Endothelial cell of umbilical vein (primary cell): ENCODE measurements at regions of chr17 and their contacts with region 1.

Region 1: GRCh38 chr17:44331249-44331760 is 6.7 kb upstream of the SLC25A39 start:
- DNase-seq: peak; percentile 80
- H3K4me3 ChIP-seq: no peak overlapping the region
- H3K27ac ChIP-seq: no peak overlapping the region
- H3K4me1 ChIP-seq: no peaks in the 10 kb centered on the region
- H3K27me3 ChIP-seq: no peaks in the 10 kb centered on the region
- CTCF ChIP-seq: peak; percentile 68 to 72
- POLR2A ChIP-seq: no peak

Region 2: DNA sequence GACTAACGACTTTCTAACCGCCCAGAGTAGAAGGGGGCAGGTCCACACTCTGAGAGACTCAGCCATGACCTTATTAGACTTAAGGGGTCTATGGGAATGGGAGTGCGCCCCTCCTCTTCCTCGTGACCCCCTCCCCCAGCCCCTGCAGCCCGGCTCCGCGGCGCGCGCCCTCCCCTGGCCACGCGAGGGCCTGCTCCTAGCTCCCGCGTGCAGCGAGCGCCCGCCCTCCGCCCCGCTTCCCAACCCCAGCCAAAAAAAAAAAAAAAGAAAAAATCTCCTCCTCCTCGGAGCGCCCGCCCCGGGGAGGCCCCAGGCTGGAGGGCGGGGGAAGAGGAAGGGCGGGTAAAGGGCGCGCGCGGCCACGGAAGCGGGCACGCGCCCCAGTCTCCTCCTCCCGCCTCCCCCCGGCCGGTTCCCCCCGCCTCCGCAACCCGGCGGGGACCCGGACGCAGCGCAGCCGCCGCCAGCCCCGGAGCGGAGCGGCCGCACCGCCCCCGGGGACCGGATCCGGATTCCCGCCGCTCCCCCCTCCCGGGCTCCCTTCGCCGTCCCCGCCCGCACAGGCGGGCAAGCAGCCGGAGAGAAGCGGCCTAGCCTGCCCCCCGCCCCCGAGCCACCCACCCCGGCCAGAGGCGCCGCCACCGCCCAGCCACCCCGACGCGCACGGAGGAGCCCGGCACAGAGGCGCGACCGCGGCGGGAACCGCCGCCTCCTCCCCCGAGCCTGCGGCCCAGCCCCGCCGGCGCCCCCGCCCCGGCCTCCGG is 112.8 kb before region 1 on chr17:
- CTCF ChIA-PET with region 1: interaction called, 68 read pairs
- POLR2A ChIA-PET with region 1: interaction called, 5 read pairs
- dilution Hi-C with region 1: no loop called
- intact Hi-C with region 1: no loop called
- DNase-seq: peak; percentile 88
- H3K4me3 ChIP-seq: peak overlapping the region; percentile 9 to 68 (median 52)
- H3K27ac ChIP-seq: peak overlapping the region; percentile 71
- H3K4me1 ChIP-seq: peaks cover 34% of the 10 kb centered on the region
- H3K27me3 ChIP-seq: no peaks in the 10 kb centered on the region
- CTCF ChIP-seq: peak; percentile 53 to 72
- POLR2A ChIP-seq: no peak

Region 3: GRCh38 chr17:44235583-44235936 is 95.7 kb before region 1 on chr17:
- CTCF ChIA-PET with region 1: no interaction called
- POLR2A ChIA-PET with region 1: no interaction called
- dilution Hi-C with region 1: no loop called
- intact Hi-C with region 1: no loop called
- DNase-seq: no peak
- H3K4me3 ChIP-seq: no peak overlapping the region
- H3K27ac ChIP-seq: no peak overlapping the region
- H3K4me1 ChIP-seq: peaks cover 8% of the 10 kb centered on the region
- H3K27me3 ChIP-seq: peaks cover 0 to 2% of the 10 kb centered on the region in 2 experiments
- CTCF ChIP-seq: no peak
- POLR2A ChIP-seq: no peak

Region 4: DNA sequence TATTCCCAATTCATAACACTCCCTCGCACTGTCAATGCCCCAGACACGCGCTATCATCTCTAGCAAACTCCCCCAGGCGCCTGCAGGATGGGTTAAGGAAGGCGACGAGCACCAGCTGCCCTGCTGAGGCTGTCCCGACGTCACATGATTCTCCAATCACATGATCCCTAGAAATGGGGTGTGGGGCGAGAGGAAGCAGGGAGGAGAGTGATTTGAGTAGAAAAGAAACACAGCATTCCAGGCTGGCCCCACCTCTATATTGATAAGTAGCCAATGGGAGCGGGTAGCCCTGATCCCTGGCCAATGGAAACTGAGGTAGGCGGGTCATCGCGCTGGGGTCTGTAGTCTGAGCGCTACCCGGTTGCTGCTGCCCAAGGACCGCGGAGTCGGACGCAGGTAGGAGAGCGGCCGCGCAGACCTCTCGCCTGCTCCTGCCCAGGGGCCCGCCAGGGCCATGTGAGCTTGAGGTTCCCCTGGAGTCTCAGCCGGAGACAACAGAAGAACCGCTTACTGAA is 13.7 kb after region 1 on chr17 and contains the start of gene GRN:
- CTCF ChIA-PET with region 1: interaction called, 29 read pairs
- POLR2A ChIA-PET with region 1: no interaction called
- dilution Hi-C with region 1: no loop called
- intact Hi-C with region 1: loop called (anchors 1 kb)
- DNase-seq: peak; percentile 99
- H3K4me3 ChIP-seq: peak within 1 kb of the TSS; percentile 31 to 70 (median 62)
- H3K27ac ChIP-seq: peak within 1 kb of the TSS; percentile 4
- H3K4me1 ChIP-seq: no peaks in the 10 kb centered on the region
- H3K27me3 ChIP-seq: peaks cover 0 to 2% of the 10 kb centered on the region in 2 experiments
- CTCF ChIP-seq: no peak
- POLR2A ChIP-seq: peak; percentile 96
- total RNA-seq, gene GRN: 343 and 346 TPM in 2 replicates

Region 5: GRCh38 chr17:44350733-44351226 is 19.5 kb after region 1 on chr17:
- CTCF ChIA-PET with region 1: interaction called, 29 read pairs
- POLR2A ChIA-PET with region 1: no interaction called
- dilution Hi-C with region 1: no loop called
- intact Hi-C with region 1: loop called (anchors 1 kb)
- DNase-seq: peak; percentile 64
- H3K4me3 ChIP-seq: no peak overlapping the region
- H3K27ac ChIP-seq: no peak overlapping the region
- H3K4me1 ChIP-seq: no peaks in the 10 kb centered on the region
- H3K27me3 ChIP-seq: no peaks in the 10 kb centered on the region
- CTCF ChIP-seq: peak; percentile 64 to 95
- POLR2A ChIP-seq: no peak